PC-9 (cell line): ENCODE measurements at regions of chr6 and their contacts with region 1.

Region 1: DNA sequence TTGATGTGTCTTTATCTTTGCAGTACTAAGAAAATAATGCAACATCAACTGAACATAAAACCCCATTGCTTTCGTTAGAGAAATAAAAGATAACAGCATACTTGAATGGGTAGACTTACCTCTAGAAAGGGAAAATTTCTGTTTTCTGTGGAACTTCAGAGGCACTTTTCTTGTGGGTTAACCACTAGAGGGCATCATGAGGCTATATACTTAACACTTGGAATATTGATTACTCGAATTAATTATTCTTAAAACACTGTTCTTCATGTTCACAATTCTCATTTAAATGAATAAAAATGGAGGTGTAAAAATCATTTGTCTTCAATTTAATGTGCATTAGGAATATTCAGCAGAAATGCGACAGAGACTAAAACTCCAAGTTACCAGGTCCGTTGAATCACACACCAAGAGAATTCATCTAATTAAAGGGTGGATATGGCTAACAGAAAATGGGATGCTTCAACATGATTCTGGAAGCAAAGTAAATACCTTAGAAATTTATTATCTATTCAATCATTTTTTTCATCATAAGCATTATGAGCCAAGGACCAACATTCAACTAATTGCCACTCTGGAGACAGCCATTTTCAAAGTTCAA is 330.8 kb upstream of the PREP start:
- DNase-seq: no peak
- H3K4me3 ChIP-seq: no peak overlapping the region
- H3K27ac ChIP-seq: no peak overlapping the region
- H3K4me1 ChIP-seq: no peaks in the 10 kb centered on the region
- H3K27me3 ChIP-seq: no peaks in the 10 kb centered on the region
- CTCF ChIP-seq: peak; percentile 92

Region 2: GRCh38 chr6:105192707-105193465 is 540.8 kb before region 1 on chr6:
- CTCF ChIA-PET with region 1: no interaction called
- POLR2A ChIA-PET with region 1: no interaction called
- intact Hi-C with region 1: no loop called
- DNase-seq: no peak
- H3K4me3 ChIP-seq: no peak overlapping the region
- H3K27ac ChIP-seq: no peak overlapping the region
- H3K4me1 ChIP-seq: peaks cover 8% of the 10 kb centered on the region; the same call in 1 of the 2 replicates
- H3K27me3 ChIP-seq: no peaks in the 10 kb centered on the region
- CTCF ChIP-seq: no peak

Region 3: GRCh38 chr6:105484238-105485161 is 249.2 kb before region 1 on chr6:
- CTCF ChIA-PET with region 1: no interaction called
- POLR2A ChIA-PET with region 1: no interaction called
- intact Hi-C with region 1: loop called (anchors 5 kb)
- DNase-seq: peak in 1 of 2 experiments; percentile 53
- H3K4me3 ChIP-seq: no peak overlapping the region
- H3K27ac ChIP-seq: no peak overlapping the region
- H3K4me1 ChIP-seq: peaks cover 13% of the 10 kb centered on the region
- H3K27me3 ChIP-seq: no peaks in the 10 kb centered on the region
- CTCF ChIP-seq: peak; percentile 97

Region 4: GRCh38 chr6:105553171-105553570 is 180.5 kb before region 1 on chr6:
- CTCF ChIA-PET with region 1: no interaction called
- POLR2A ChIA-PET with region 1: no interaction called
- intact Hi-C with region 1: no loop called
- DNase-seq: peak; percentile 45 to 71
- H3K4me3 ChIP-seq: no peak overlapping the region
- H3K27ac ChIP-seq: no peak overlapping the region
- H3K4me1 ChIP-seq: peaks cover 13% of the 10 kb centered on the region
- H3K27me3 ChIP-seq: no peaks in the 10 kb centered on the region
- CTCF ChIP-seq: no peak

Region 5: DNA sequence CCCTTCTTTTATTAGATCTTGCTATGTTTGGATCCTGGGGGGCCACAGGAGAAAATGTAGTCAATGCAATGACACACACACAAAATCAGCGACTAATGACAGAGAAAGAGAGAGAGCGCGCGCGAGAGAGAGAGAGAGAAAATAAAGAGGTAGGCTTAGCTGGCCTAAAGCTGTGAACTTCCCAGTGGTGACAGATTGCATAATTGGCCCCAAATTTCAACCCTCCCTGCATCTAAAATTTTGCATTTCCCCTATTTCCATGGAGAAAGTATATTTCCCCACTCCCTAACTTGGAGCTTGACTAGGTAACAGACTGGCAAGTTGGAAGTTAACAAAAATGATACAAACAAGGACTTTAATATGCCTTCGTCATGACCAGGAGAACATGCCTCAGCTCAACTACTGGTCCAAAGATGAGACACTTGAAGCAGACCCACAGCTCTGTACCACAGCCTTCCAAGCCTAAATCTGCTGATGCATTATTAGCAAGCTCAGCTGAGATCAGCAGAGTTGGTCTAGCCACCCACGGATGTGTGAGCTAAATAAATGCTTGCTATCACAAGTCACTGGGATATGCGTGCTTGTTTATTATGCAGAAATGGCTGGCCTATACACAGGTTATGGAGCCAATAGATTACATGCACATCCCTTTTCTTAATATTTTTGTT is 234.4 kb after region 1 on chr6:
- CTCF ChIA-PET with region 1: no interaction called
- POLR2A ChIA-PET with region 1: no interaction called
- intact Hi-C with region 1: loop called (anchors 10 kb)
- DNase-seq: no peak
- H3K4me3 ChIP-seq: no peak overlapping the region
- H3K27ac ChIP-seq: no peak overlapping the region
- H3K4me1 ChIP-seq: peaks cover 6% of the 10 kb centered on the region; the same call in 1 of the 2 replicates
- H3K27me3 ChIP-seq: no peaks in the 10 kb centered on the region
- CTCF ChIP-seq: no peak

Region 6: GRCh38 chr6:105985816-105986632 is 252.4 kb after region 1 on chr6:
- CTCF ChIA-PET with region 1: interaction called, 23 read pairs
- POLR2A ChIA-PET with region 1: no interaction called
- intact Hi-C with region 1: no loop called
- DNase-seq: no peak
- H3K4me3 ChIP-seq: no peak overlapping the region
- H3K27ac ChIP-seq: no peak overlapping the region
- H3K4me1 ChIP-seq: no peaks in the 10 kb centered on the region
- H3K27me3 ChIP-seq: no peaks in the 10 kb centered on the region
- CTCF ChIP-seq: no peak